Ovary (tissue), 10 donors: ENCODE measurements at regions of chr20 and their contacts with region 1.

Region 1: GRCh38 chr20:48075741-48076488 is 290.6 kb upstream of the SULF2 start:
- DNase-seq: no peak
- H3K4me3 ChIP-seq: no peak overlapping the region
- H3K27ac ChIP-seq: no peak overlapping the region
- H3K4me1 ChIP-seq: peaks cover 4% of the 10 kb centered on the region
- H3K27me3 ChIP-seq: no peaks in the 10 kb centered on the region
- CTCF ChIP-seq: no peak
- EP300 ChIP-seq: no peak
- POLR2A ChIP-seq: no peak

Region 2: GRCh38 chr20:48012197-48013085 is 63.5 kb before region 1 on chr20:
- intact Hi-C with region 1: loop called in 1 of 4 experiments (anchors 10 kb)
- DNase-seq: peak in 1 of 5 donors; percentile 3
- H3K4me3 ChIP-seq: no peak overlapping the region
- H3K27ac ChIP-seq: no peak overlapping the region
- H3K4me1 ChIP-seq: peaks cover 8% of the 10 kb centered on the region
- H3K27me3 ChIP-seq: no peaks in the 10 kb centered on the region
- CTCF ChIP-seq: no peak
- EP300 ChIP-seq: no peak
- POLR2A ChIP-seq: no peak